ENCODE measurements at regions of chr17 and their contacts with region 1.

Region 1: DNA sequence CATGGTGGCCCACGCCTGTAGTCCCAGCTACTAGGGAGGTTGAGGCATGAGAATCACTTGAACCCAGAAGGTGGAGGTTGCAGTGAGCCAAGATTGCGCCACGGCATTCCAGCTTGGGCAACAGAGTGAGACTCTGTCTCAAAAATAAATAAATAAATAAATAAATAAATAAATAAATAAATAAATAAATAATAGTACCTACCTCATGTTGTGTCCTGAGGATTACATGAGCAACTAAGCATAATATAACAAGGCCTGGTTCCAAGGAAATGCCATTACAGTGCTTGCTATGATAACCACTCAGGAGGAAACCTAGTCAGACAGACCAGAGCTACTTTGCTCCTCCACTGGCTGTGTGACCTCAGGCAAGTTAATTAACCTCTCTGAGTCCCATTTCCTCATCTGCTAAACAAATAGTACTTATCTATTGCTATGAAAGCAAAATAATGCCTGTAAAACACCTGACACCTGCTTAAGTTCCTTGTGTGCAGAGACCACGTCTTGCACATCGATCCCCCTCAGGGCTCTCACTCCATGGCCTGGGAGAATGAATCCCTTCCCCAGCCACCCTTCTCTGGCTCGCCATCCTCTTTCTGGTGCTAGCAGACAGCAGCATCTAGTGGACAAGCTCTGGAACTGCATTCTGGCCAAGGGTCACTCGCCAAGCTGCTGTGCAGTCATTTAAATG is 7.5 kb downstream of the EPOP start:
- DNase-seq: peak; percentile 66
- H3K4me3 ChIP-seq: no peak overlapping the region
- H3K27ac ChIP-seq: no peak overlapping the region
- H3K4me1 ChIP-seq: no peaks in the 10 kb centered on the region
- H3K27me3 ChIP-seq: peaks cover 50% of the 10 kb centered on the region
- CTCF ChIP-seq: peak; percentile 98 to 99 (median 98)
- EP300 ChIP-seq: no peak
- POLR2A ChIP-seq: no peak

Region 2: GRCh38 chr17:37117373-37118142 is 1549.7 kb before region 1 on chr17:
- in situ Hi-C with region 1: no loop called
- intact Hi-C with region 1: loop called (anchors 5 kb)
- DNase-seq: no peak
- H3K4me3 ChIP-seq: no peak overlapping the region
- H3K27ac ChIP-seq: no peak overlapping the region
- H3K4me1 ChIP-seq: no peaks in the 10 kb centered on the region
- H3K27me3 ChIP-seq: no peaks in the 10 kb centered on the region
- CTCF ChIP-seq: no peak
- EP300 ChIP-seq: no peak
- POLR2A ChIP-seq: no peak

Region 3: DNA sequence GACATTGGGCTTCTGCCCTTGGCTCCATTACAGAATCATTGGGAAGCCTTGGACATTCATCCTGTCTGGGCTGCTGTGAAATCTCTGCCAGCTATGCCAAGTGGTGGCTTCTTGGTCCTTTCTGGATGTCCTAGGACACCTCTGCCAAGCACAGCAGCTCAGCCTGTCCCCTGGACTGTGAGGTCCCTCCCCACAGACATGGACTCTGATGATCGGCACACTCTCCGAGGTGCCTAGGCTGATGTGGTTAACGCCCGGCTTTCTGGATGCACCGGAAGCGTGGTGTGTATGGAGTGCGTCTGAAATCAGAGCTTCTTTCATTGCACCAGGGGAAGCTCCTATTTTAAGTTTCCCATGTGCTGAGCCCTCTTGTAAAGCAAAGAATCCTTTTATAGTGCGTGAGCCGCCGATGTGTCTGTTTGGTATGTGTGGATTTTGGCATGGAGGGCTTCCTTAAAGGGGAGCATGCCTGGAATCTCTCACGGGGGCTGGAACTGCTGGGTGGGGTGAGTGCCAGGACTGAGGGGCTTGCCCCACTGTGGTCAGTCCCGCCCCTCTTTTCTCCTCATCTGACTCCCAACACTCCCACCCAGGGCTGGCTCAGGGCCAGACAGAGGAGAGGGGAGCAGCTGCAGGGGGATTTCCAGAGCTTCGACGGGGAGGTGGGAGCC is 245.9 kb before region 1 on chr17:
- in situ Hi-C with region 1: no loop called
- intact Hi-C with region 1: no loop called
- DNase-seq: no peak
- H3K4me3 ChIP-seq: no peak overlapping the region
- H3K27ac ChIP-seq: peak overlapping the region; percentile 59 to 79 (median 73)
- H3K4me1 ChIP-seq: peaks cover 6 to 46% (median 21%) of the 10 kb centered on the region in 4 donors
- H3K27me3 ChIP-seq: peaks cover 63% of the 10 kb centered on the region
- CTCF ChIP-seq: no peak
- EP300 ChIP-seq: no peak
- POLR2A ChIP-seq: no peak

Region 4: GRCh38 chr17:38544839-38545209 is 122.4 kb before region 1 on chr17:
- in situ Hi-C with region 1: loop called in 3 of 4 experiments (anchors 10 to 25 kb)
- intact Hi-C with region 1: no loop called
- DNase-seq: no peak
- H3K4me3 ChIP-seq: no peak overlapping the region
- H3K27ac ChIP-seq: no peak overlapping the region
- H3K4me1 ChIP-seq: no peaks in the 10 kb centered on the region
- H3K27me3 ChIP-seq: peaks cover 13% of the 10 kb centered on the region
- CTCF ChIP-seq: no peak
- EP300 ChIP-seq: no peak
- POLR2A ChIP-seq: no peak

Region 5: DNA sequence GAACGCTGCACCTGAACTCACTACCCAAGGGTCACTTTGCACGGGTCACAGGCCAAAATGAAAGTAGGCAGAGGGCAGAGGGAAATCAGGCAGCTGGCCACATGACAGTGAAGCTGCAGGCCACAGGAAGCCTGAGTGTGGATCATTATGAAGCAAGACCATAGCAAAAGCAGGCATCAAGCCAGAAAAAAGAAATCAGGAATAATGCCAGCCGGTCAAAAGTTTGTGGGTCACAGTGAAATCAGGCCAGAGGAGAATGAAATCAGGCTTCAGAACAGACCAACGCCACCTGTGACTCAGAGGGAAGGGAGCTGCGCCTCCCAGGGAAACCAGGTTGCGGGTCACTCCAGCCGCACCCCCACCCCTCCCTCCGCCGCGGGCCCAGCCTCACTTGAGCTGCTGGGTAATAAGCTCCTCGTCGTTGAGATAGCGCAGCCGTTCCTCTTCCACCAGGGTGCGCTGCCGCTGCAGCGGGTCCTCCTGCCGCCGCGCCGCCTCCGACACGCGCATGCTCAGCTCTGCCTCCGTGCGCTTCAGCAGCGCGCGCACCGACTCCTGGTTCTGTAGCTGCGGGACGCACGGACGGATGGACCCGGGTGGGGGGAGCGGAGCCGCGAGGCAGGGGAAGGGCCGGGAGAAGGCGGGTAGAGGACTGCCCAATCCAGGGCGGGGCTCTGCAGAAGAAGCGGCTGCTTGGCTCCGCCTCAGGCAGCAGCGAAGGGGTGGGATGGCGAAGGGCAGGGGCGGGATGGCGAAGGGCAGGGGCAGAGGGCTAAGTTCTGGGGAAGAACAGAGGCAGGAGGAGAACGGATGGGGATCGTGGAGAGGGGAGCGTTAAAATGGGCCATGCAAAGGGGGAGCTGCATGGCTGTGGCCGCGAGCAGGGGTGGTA is 109.2 kb before region 1 on chr17:
- in situ Hi-C with region 1: loop called in 2 of 4 experiments (anchors 10 to 25 kb)
- intact Hi-C with region 1: loop called (anchors 2 kb)
- DNase-seq: peak; percentile 95
- H3K4me3 ChIP-seq: peak overlapping the region in 3 of 4 donors; percentile 18 to 46 (median 28)
- H3K27ac ChIP-seq: peak overlapping the region in 3 of 4 donors; percentile 3 to 45 (median 31)
- H3K4me1 ChIP-seq: peaks cover 9 to 30% (median 26%) of the 10 kb centered on the region in 4 donors
- H3K27me3 ChIP-seq: peaks cover 40% of the 10 kb centered on the region
- CTCF ChIP-seq: peak; percentile 86 to 94 (median 88)
- EP300 ChIP-seq: no peak
- POLR2A ChIP-seq: no peak

Region 6: GRCh38 chr17:38605888-38606645 is 61.2 kb before region 1 on chr17 and contains the start of gene SRCIN1:
- in situ Hi-C with region 1: no loop called
- intact Hi-C with region 1: loop called (anchors 10 kb)
- DNase-seq: peak; percentile 74
- H3K4me3 ChIP-seq: peak within 1 kb of the TSS; percentile 61 to 75 (median 66)
- H3K27ac ChIP-seq: peak within 1 kb of the TSS; percentile 62 to 79 (median 74)
- H3K4me1 ChIP-seq: peaks cover 15 to 35% (median 22%) of the 10 kb centered on the region in 4 donors
- H3K27me3 ChIP-seq: peaks cover 62% of the 10 kb centered on the region
- CTCF ChIP-seq: peak; percentile 88 to 98 (median 96)
- EP300 ChIP-seq: no peak
- POLR2A ChIP-seq: no peak
- total RNA-seq, gene SRCIN1: 1.8 to 8.8 (median 5.2) TPM

Region 7: GRCh38 chr17:40510328-40510648 is 1843.0 kb after region 1 on chr17:
- in situ Hi-C with region 1: no loop called
- intact Hi-C with region 1: loop called (anchors 5 kb)
- DNase-seq: no peak
- H3K4me3 ChIP-seq: no peak overlapping the region
- H3K27ac ChIP-seq: no peak overlapping the region
- H3K4me1 ChIP-seq: no peaks in the 10 kb centered on the region
- H3K27me3 ChIP-seq: no peaks in the 10 kb centered on the region
- CTCF ChIP-seq: no peak
- EP300 ChIP-seq: no peak
- POLR2A ChIP-seq: no peak

Measured in transverse colon (tissue), 4 donors.